Panc1 (cell line): ENCODE measurements at regions of chr19 and their contacts with region 1.

Region 1: GRCh38 chr19:16041299-16041990 is 34.9 kb upstream of the TPM4 start:
- DNase-seq: peak; percentile 46
- ATAC-seq: peak; percentile 96
- H3K4me3 ChIP-seq: 0 out of 4 replicates have a peak overlapping the region, but pooled peaks of 1 of the 2 experiments have one; percentile 10
- H3K27ac ChIP-seq: no peak overlapping the region
- H3K4me1 ChIP-seq: no peaks in the 10 kb centered on the region
- H3K27me3 ChIP-seq: no peaks in the 10 kb centered on the region
- CTCF ChIP-seq: peak; percentile 95

Region 2: GRCh38 chr19:16018801-16019551 is 22.5 kb before region 1 on chr19:
- CTCF ChIA-PET with region 1: no interaction called
- POLR2A ChIA-PET with region 1: no interaction called
- in situ Hi-C with region 1: no loop called
- intact Hi-C with region 1: no loop called
- DNase-seq: no peak
- ATAC-seq: no peak
- H3K4me3 ChIP-seq: no peak overlapping the region
- H3K27ac ChIP-seq: no peak overlapping the region
- H3K4me1 ChIP-seq: no peaks in the 10 kb centered on the region
- H3K27me3 ChIP-seq: no peaks in the 10 kb centered on the region
- CTCF ChIP-seq: no peak

Region 3: GRCh38 chr19:16076958-16077611 is 35.6 kb after region 1 on chr19:
- CTCF ChIA-PET with region 1: interaction called, 3 read pairs
- POLR2A ChIA-PET with region 1: interaction called, 11 read pairs
- in situ Hi-C with region 1: no loop called
- intact Hi-C with region 1: no loop called
- DNase-seq: no peak
- ATAC-seq: no peak
- H3K4me3 ChIP-seq: peak overlapping the region; percentile 63 to 91
- H3K27ac ChIP-seq: peak overlapping the region; percentile 83
- H3K4me1 ChIP-seq: peaks cover 18% of the 10 kb centered on the region
- H3K27me3 ChIP-seq: no peaks in the 10 kb centered on the region
- CTCF ChIP-seq: no peak